Endothelial cell of umbilical vein (primary cell): ENCODE measurements at regions of chr2 and their contacts with region 1.

Region 1: GRCh38 chr2:101205521-101205998 is 47.1 kb upstream of the CNOT11 start:
- DNase-seq: peak; percentile 76
- H3K4me3 ChIP-seq: peak overlapping the region in 1 of 3 experiments; percentile 24
- H3K27ac ChIP-seq: no peak overlapping the region
- H3K4me1 ChIP-seq: peaks cover 1% of the 10 kb centered on the region
- H3K27me3 ChIP-seq: no peaks in the 10 kb centered on the region
- CTCF ChIP-seq: peak; percentile 51 to 65
- POLR2A ChIP-seq: no peak

Region 2: GRCh38 chr2:100610381-100610831 is 595.2 kb before region 1 on chr2:
- CTCF ChIA-PET with region 1: interaction called, 15 read pairs
- POLR2A ChIA-PET with region 1: interaction called, 3 read pairs
- dilution Hi-C with region 1: no loop called
- intact Hi-C with region 1: loop called (anchors 1 kb)
- DNase-seq: peak; percentile 60
- H3K4me3 ChIP-seq: no peak overlapping the region
- H3K27ac ChIP-seq: no peak overlapping the region
- H3K4me1 ChIP-seq: no peaks in the 10 kb centered on the region
- H3K27me3 ChIP-seq: no peaks in the 10 kb centered on the region
- CTCF ChIP-seq: peak; percentile 64 to 88
- POLR2A ChIP-seq: no peak

Region 3: DNA sequence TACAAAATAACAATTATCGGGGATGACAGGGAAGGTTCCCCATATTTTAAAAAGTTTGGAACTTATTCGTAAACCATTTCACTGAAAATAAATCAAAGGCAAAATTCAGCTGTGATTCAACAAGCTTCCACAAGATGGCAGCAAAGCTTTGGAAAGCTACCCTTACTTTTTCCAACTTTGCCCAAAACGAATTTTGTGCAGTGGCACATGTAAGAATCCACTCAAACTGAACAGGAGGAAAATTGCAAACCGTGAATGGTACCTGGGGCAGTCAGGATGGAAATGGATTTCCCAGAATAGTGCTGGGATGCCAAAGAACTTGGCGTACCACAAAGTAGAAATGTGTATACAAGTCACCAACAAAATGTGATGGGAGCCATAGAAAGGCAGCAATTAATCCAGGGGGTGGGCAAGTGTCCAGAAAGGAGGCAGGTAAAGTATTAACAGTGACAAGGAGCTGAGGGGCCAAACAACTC is 192.8 kb before region 1 on chr2:
- CTCF ChIA-PET with region 1: interaction called, 72 read pairs
- POLR2A ChIA-PET with region 1: no interaction called
- dilution Hi-C with region 1: no loop called
- intact Hi-C with region 1: loop called (anchors 1 kb)
- DNase-seq: peak; percentile 56
- H3K4me3 ChIP-seq: no peak overlapping the region
- H3K27ac ChIP-seq: no peak overlapping the region
- H3K4me1 ChIP-seq: no peaks in the 10 kb centered on the region
- H3K27me3 ChIP-seq: no peaks in the 10 kb centered on the region
- CTCF ChIP-seq: peak; percentile 57 to 72
- POLR2A ChIP-seq: no peak

Region 4: DNA sequence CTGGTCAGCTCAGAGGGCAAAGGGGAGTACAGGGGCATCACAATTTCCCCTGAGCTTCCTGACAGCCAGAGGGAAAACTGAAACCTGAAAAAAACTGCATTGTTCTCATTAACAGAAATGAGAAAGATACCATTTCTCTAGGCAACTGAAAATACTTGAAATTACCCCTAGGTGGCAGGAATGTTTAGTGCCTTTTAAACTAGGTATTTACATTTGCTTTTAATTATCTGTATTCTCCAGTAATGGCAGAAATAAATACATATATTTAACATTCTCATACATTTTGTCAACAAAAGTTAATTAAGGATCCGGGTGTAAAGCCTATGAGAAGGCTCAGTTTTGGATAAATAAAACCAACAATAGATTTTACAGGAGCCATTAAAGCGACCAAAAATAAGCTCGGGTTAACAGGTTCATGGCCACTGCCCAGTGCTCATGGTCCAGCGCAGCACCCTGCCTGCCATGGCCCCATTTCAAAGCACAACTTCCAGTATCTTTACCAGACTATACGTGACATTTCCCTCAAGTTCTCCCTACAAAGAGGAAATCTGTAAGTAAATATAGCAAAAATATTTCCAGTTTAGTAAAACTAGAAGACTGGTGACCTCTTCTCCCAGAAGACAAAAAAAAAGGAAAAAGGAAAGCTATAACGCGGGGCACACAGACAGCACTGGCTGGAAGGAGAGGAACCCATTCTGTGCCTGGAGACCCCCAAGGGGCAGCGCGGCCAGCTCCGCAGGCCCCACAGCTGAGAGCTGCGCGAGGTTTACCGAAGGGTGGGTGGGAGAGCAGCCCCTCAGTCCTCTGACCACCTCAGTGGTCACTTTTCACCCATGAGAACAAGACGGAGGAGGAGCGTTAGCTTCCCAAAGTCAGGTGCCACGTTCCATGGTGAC is 168.8 kb before region 1 on chr2:
- CTCF ChIA-PET with region 1: interaction called, 162 read pairs
- POLR2A ChIA-PET with region 1: no interaction called
- dilution Hi-C with region 1: loop called (anchors 25 kb)
- intact Hi-C with region 1: loop called (anchors 1 kb)
- DNase-seq: peak; percentile 53
- H3K4me3 ChIP-seq: no peak overlapping the region
- H3K27ac ChIP-seq: no peak overlapping the region
- H3K4me1 ChIP-seq: no peaks in the 10 kb centered on the region
- H3K27me3 ChIP-seq: no peaks in the 10 kb centered on the region
- CTCF ChIP-seq: peak; percentile 24 to 40
- POLR2A ChIP-seq: no peak

Region 5: DNA sequence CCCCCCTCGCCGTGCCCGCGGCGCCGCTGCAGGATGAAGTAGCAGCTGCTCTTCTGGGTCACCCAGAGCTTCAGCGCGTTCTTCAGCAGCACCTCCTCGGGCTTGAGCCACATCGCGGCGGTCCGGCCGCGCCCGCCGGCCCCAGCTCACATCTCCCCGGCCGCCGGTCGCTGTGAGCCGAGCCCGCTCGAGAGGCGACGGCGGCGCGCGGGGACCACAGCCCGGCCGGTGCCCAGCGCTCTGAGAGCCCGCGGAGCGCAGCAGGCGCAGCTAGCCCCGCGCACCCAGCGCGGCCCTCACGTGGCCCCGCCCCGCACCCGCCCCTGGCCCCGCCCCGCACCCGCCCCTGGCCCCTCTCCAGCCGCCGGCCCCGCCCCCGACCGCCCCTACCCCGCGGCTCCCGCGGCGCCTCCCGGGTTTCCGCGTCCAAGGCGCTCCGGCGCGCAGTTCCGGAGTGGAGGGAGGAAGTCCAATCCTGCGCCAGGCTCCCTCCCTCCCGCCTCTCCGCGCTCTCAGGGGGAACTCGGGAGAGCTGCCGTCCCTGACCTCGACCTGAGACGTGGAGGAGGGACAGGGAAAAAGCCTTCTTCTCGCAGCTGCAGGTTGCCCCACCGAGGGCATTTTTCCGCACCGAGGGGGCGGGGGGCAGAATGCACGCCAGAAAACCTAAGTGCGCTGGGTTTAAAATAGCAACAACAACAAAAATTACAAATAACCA is 54.3 kb before region 1 on chr2 and contains the start of gene TBC1D8:
- CTCF ChIA-PET with region 1: interaction called, 48 read pairs
- POLR2A ChIA-PET with region 1: no interaction called
- dilution Hi-C with region 1: no loop called
- intact Hi-C with region 1: loop called (anchors 2 kb)
- DNase-seq: peak; percentile 75
- H3K4me3 ChIP-seq: peak within 1 kb of the TSS; percentile 56 to 89 (median 87)
- H3K27ac ChIP-seq: peak within 1 kb of the TSS; percentile 68
- H3K4me1 ChIP-seq: peaks cover 37% of the 10 kb centered on the region
- H3K27me3 ChIP-seq: no peaks in the 10 kb centered on the region
- CTCF ChIP-seq: no peak
- POLR2A ChIP-seq: peak; percentile 94
- total RNA-seq, gene TBC1D8: 30.6 and 32.1 TPM in 2 replicates

Region 6: GRCh38 chr2:101219246-101219645 is 13.7 kb after region 1 on chr2:
- CTCF ChIA-PET with region 1: interaction called, 12 read pairs
- POLR2A ChIA-PET with region 1: no interaction called
- dilution Hi-C with region 1: no loop called
- intact Hi-C with region 1: no loop called
- DNase-seq: no peak
- H3K4me3 ChIP-seq: no peak overlapping the region
- H3K27ac ChIP-seq: no peak overlapping the region
- H3K4me1 ChIP-seq: no peaks in the 10 kb centered on the region
- H3K27me3 ChIP-seq: peaks cover 0 to 2% of the 10 kb centered on the region in 2 experiments
- CTCF ChIP-seq: no peak
- POLR2A ChIP-seq: no peak